CD8-positive, alpha-beta memory T cell (primary cell): ENCODE measurements at regions of chr14 and their contacts with region 1.

Region 1: GRCh38 chr14:100067971-100068959 is 3.0 kb downstream of the EVL start:
- DNase-seq: peak; percentile 83 to 97 (median 93)
- H3K4me3 ChIP-seq: peak overlapping the region; percentile 87
- H3K4me3 Mint-ChIP-seq: peak overlapping the region; percentile 84 to 100 (median 99)
- H3K27ac ChIP-seq: peak overlapping the region; percentile 84
- H3K27ac Mint-ChIP-seq: peak overlapping the region; percentile 90 to 100 (median 99)
- H3K4me1 ChIP-seq: peaks cover 69% of the 10 kb centered on the region
- H3K4me1 Mint-ChIP-seq: peaks cover 75 to 83% (median 80%) of the 10 kb centered on the region in 3 donors
- H3K27me3 ChIP-seq: no peaks in the 10 kb centered on the region
- H3K27me3 Mint-ChIP-seq: peaks cover 0 to 2% of the 10 kb centered on the region in 2 donors

Region 2: DNA sequence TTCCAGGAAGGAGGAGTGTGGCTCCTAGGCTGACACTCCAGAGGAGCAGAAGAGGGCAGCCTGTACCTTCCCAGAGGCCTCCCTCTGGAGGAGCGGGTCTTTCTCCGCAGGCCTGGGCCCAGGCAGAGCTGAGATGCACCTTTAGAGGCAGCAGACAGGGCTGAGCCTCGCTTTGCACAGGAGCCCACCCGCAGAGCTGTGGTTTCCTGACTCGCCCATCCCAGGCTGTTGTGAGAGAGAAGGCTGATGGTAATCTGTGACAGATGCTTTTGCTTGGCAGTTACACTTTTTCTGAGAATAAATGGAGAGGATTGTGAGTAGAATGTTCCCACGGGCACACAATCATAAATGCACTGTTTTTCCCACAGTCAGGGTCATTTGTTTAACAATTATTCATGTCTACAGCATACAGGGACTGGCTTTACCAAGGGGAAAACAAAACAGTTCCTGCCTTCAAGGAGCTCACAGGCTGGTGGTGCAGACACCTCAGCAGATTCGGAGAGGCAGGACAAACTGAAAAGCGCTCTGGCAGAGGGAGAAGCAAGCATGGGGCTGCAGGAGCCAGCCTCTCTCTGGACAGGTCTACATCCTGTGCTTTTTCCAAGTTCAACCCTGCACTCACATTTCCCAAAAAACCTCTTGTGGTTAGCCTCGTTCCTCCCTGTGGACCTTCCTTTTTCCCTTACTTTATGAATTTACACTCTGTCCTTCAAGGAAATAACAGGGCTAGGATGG is 10.9 kb after region 1 on chr14:
- CTCF ChIA-PET with region 1: interaction called, 1,568 read pairs
- POLR2A ChIA-PET with region 1: interaction called, 274 read pairs
- DNase-seq: peak; percentile 81 to 93 (median 89)
- H3K4me3 ChIP-seq: peak overlapping the region; percentile 44
- H3K4me3 Mint-ChIP-seq: peak overlapping the region; percentile 70 to 88 (median 80)
- H3K27ac ChIP-seq: peak overlapping the region; percentile 58
- H3K27ac Mint-ChIP-seq: peak overlapping the region; percentile 85 to 98 (median 94)
- H3K4me1 ChIP-seq: peaks cover 96% of the 10 kb centered on the region
- H3K4me1 Mint-ChIP-seq: peaks cover 96 to 100% (median 99%) of the 10 kb centered on the region in 3 donors
- H3K27me3 ChIP-seq: no peaks in the 10 kb centered on the region
- H3K27me3 Mint-ChIP-seq: no peaks in the 10 kb centered on the region

Region 3: GRCh38 chr14:100100355-100100703 is 32.1 kb after region 1 on chr14:
- CTCF ChIA-PET with region 1: interaction called, 1,568 read pairs
- POLR2A ChIA-PET with region 1: interaction called, 106 read pairs
- DNase-seq: peak in 1 of 5 donors; percentile 30
- H3K4me3 ChIP-seq: no peak overlapping the region
- H3K4me3 Mint-ChIP-seq: peak overlapping the region in 6 of 7 donors; percentile 13 to 73 (median 50)
- H3K27ac ChIP-seq: no peak overlapping the region
- H3K27ac Mint-ChIP-seq: peak overlapping the region; percentile 58 to 90 (median 88)
- H3K4me1 ChIP-seq: peaks cover 100% of the 10 kb centered on the region
- H3K4me1 Mint-ChIP-seq: peaks cover 90 to 100% (median 99%) of the 10 kb centered on the region in 3 donors
- H3K27me3 ChIP-seq: no peaks in the 10 kb centered on the region
- H3K27me3 Mint-ChIP-seq: peaks cover 0 to 3% of the 10 kb centered on the region in 2 donors